CD8-positive, alpha-beta T cell (primary cell): ENCODE measurements at regions of chr22 and their contacts with region 1.

Region 1: DNA sequence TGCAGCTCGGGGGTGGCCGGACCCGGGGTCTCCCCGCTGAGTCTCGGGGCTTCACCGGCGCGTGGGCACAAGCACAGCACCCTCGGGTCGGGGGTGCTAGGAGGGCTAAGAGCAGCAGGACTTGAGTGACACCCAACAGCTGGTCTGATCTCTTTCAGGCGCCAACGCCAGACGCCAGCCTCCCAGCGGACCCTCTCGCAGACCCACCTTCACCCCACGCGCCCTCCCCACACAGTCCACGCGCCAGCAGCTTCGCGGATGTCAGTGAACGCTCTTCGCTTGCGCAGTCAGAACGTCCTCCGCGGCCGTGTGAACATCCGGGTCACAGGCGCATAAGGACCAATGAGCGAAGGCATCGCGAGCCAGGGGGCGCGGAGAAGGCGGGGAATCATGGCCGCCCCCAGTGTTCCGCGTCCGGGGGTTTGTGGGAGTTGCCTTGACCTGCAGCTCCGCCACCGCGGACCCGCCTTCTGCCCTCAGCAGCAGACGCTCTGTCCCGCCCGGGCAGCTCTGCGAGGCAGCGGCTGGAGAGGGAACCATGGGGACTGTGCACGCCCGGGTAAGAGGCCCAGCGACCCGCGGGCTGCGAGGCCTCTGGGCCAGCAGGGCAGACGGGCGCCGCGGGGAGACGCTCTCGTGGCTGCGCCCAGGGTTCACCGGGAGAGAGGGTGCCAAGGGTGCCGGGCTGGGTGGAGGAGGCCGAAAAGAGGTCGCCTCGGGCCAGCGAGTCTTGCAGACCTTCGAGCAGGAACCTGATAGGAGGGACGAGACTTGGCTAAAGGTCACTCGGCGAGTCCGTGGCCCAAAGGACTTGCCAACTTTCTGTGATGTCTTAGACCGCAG is at the start of gene SAMM50:
- DNase-seq: peak; percentile 82 to 95 (median 92)
- ATAC-seq: peak; percentile 98
- H3K4me3 ChIP-seq: peak within 1 kb of the TSS; percentile 86 to 91
- H3K4me3 Mint-ChIP-seq: peak within 1 kb of the TSS; percentile 97
- H3K27ac ChIP-seq: peak within 1 kb of the TSS; percentile 83 to 89
- H3K27ac Mint-ChIP-seq: peak within 1 kb of the TSS; percentile 93
- H3K4me1 ChIP-seq: peaks cover 22% of the 10 kb centered on the region
- H3K4me1 Mint-ChIP-seq: peaks cover 44% of the 10 kb centered on the region
- H3K27me3 ChIP-seq: no peaks in the 10 kb centered on the region
- H3K27me3 Mint-ChIP-seq: peaks cover 10% of the 10 kb centered on the region
- CTCF ChIP-seq: no peak
- total RNA-seq, gene SAMM50: 20.7 to 24.9 TPM

Region 2: GRCh38 chr22:43812149-43812842 is 143.0 kb before region 1 on chr22 and contains the start of gene EFCAB6:
- CTCF ChIA-PET with region 1: no interaction called
- POLR2A ChIA-PET with region 1: no interaction called
- intact Hi-C with region 1: loop called (anchors 1 to 2 kb)
- DNase-seq: peak; percentile 69 to 96 (median 90)
- ATAC-seq: peak; percentile 91
- H3K4me3 ChIP-seq: peak within 1 kb of the TSS; percentile 84 to 92
- H3K4me3 Mint-ChIP-seq: peak within 1 kb of the TSS; percentile 95
- H3K27ac ChIP-seq: peak within 1 kb of the TSS; percentile 46 to 78
- H3K27ac Mint-ChIP-seq: peak within 1 kb of the TSS; percentile 85
- H3K4me1 ChIP-seq: peaks cover 15% of the 10 kb centered on the region
- H3K4me1 Mint-ChIP-seq: peaks cover 27% of the 10 kb centered on the region
- H3K27me3 ChIP-seq: no peaks in the 10 kb centered on the region
- H3K27me3 Mint-ChIP-seq: peaks cover 2% of the 10 kb centered on the region
- CTCF ChIP-seq: no peak
- total RNA-seq, gene EFCAB6: 0.22 TPM in 1 of 2 experiments, not detected in the other

Region 3: GRCh38 chr22:43923631-43924464 is 31.4 kb before region 1 on chr22 and contains the start of gene PNPLA3:
- CTCF ChIA-PET with region 1: no interaction called
- POLR2A ChIA-PET with region 1: interaction called, 3 read pairs
- intact Hi-C with region 1: loop called (anchors 2 kb)
- DNase-seq: peak; percentile 43 to 86 (median 78)
- ATAC-seq: peak; percentile 93
- H3K4me3 ChIP-seq: peak within 1 kb of the TSS; percentile 49 to 54
- H3K4me3 Mint-ChIP-seq: peak within 1 kb of the TSS; percentile 81
- H3K27ac ChIP-seq: no peak within 1 kb of the TSS
- H3K27ac Mint-ChIP-seq: no peak within 1 kb of the TSS
- H3K4me1 ChIP-seq: peaks cover 7% of the 10 kb centered on the region
- H3K4me1 Mint-ChIP-seq: peaks cover 5% of the 10 kb centered on the region
- H3K27me3 ChIP-seq: peaks cover 0 to 9% of the 10 kb centered on the region in 2 experiments
- H3K27me3 Mint-ChIP-seq: peaks cover 25% of the 10 kb centered on the region
- CTCF ChIP-seq: no peak
- total RNA-seq, gene PNPLA3: not detected

Region 4: GRCh38 chr22:44005524-44005923 is 50.3 kb after region 1 on chr22:
- CTCF ChIA-PET with region 1: no interaction called
- POLR2A ChIA-PET with region 1: no interaction called
- intact Hi-C with region 1: no loop called
- DNase-seq: no peak
- ATAC-seq: no peak
- H3K4me3 ChIP-seq: no peak overlapping the region
- H3K4me3 Mint-ChIP-seq: no peak overlapping the region
- H3K27ac ChIP-seq: no peak overlapping the region
- H3K27ac Mint-ChIP-seq: no peak overlapping the region
- H3K4me1 ChIP-seq: no peaks in the 10 kb centered on the region
- H3K4me1 Mint-ChIP-seq: no peaks in the 10 kb centered on the region
- H3K27me3 ChIP-seq: no peaks in the 10 kb centered on the region
- H3K27me3 Mint-ChIP-seq: no peaks in the 10 kb centered on the region
- CTCF ChIP-seq: no peak

Region 5: DNA sequence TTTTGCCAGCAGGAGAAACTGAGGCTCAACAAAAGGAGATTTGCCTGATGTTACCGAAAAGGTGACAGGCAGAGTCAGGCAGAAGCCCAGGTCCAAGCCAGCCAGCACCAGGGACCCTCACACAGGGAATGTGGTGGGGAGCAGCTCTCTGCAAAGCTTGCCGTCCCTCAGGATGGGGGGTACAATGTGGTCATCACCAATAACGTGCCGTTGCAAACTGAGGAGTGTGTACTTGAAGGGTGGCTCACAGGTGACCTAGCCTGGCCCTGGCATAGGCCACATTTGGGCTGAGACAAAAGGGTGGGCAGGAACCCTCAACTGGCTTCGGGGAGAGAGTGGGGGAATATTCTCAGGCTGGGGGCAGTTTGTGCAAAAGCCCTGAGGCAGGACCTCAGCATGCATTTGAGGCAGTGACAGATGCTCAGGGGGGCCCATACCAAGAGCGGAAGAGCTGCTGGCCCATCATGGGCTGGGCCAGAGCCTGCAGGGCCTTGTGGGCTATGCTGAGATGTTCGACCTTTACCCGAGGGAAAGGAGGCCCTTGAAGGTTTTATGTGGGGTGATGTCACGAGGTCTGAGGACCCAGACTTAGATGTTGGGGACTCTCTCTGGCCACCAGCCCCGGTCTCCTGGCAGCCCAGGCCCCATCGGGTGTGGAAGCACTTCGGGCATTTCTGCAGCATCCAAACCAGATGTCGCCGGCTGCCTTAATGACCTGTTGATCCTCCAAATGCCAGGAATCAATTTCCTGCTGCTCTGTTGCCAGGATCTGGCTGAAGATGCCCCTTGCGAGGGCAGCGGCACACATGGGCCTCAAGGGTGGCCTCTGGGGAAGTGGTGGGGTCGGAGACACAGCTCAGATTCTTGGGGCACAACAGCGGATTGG is 414.9 kb after region 1 on chr22:
- CTCF ChIA-PET with region 1: no interaction called
- POLR2A ChIA-PET with region 1: no interaction called
- intact Hi-C with region 1: no loop called
- DNase-seq: no peak
- ATAC-seq: no peak
- H3K4me3 ChIP-seq: no peak overlapping the region
- H3K4me3 Mint-ChIP-seq: no peak overlapping the region
- H3K27ac ChIP-seq: no peak overlapping the region
- H3K27ac Mint-ChIP-seq: no peak overlapping the region
- H3K4me1 ChIP-seq: no peaks in the 10 kb centered on the region
- H3K4me1 Mint-ChIP-seq: no peaks in the 10 kb centered on the region
- H3K27me3 ChIP-seq: no peaks in the 10 kb centered on the region
- H3K27me3 Mint-ChIP-seq: peaks cover 4% of the 10 kb centered on the region
- CTCF ChIP-seq: no peak

Region 6: GRCh38 chr22:45163451-45164269 is 1208.4 kb after region 1 on chr22 and contains the start of gene NUP50:
- CTCF ChIA-PET with region 1: no interaction called
- POLR2A ChIA-PET with region 1: interaction called, 3 read pairs
- intact Hi-C with region 1: loop called in 1 of 2 experiments (anchors 10 kb)
- DNase-seq: peak; percentile 92 to 99 (median 96)
- ATAC-seq: peak; percentile 83
- H3K4me3 ChIP-seq: peak within 1 kb of the TSS; percentile 86 to 90
- H3K4me3 Mint-ChIP-seq: peak within 1 kb of the TSS; percentile 92
- H3K27ac ChIP-seq: peak within 1 kb of the TSS; percentile 86 to 88
- H3K27ac Mint-ChIP-seq: peak within 1 kb of the TSS; percentile 93
- H3K4me1 ChIP-seq: peaks cover 38% of the 10 kb centered on the region
- H3K4me1 Mint-ChIP-seq: peaks cover 65% of the 10 kb centered on the region
- H3K27me3 ChIP-seq: no peaks in the 10 kb centered on the region
- H3K27me3 Mint-ChIP-seq: no peaks in the 10 kb centered on the region
- CTCF ChIP-seq: no peak
- total RNA-seq, gene NUP50: 133 to 134 TPM